Activated CD4-positive, alpha-beta memory T cell treated with anti-CD3 and anti-CD28 coated beads, Interleukin-2, amount 10 ng/mL, durations not matched to agents 7 days and 5 days (primary cell): ENCODE measurements at regions of chr18 and their contacts with region 1.

Region 1: DNA sequence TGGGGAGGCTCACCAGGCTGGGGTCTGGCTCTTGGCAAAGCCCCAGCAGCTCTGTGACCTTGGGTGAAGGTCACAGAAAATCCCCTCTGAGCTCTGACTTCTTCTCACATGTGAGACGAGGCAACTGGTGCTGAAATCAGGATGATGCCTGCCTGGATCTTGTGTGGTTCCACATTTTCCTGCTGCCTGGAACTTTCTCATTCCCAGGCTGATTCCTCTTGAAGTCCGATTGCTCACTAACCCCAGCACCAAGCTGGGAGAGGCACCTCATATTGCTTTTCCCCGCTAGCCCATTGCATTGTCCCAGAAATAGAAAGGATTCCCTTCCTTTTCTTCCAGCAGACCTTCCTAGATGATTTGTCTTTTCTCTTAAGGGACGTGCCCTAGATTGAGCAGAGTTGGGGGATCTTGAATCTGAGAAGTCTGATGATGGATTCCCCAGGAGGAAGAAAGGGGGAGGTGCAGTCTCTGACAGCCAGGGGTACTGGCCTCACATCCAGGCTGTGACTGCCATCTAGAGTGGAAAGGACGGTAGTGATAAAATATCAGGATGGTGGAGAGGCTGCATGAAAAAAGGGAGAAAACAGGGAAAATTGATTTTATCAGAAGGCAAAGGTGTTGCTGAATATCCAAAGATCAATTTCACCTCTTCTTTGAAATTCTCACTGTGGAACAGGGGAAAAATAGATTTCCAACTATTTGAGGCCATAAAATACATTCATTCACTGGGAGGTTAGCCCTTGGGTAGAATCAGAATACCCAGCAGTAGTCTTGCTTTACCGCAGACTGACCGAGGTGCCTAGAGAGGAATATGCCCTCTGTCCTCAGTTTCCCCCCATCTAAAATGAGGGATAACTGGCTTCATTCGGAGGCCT is 96.3 kb downstream of the FAM210A start:
- DNase-seq: peak; percentile 55
- H3K4me3 Mint-ChIP-seq: no peak overlapping the region
- H3K27ac Mint-ChIP-seq: no peak overlapping the region
- H3K4me1 Mint-ChIP-seq: peaks cover 9% of the 10 kb centered on the region
- H3K27me3 Mint-ChIP-seq: no peaks in the 10 kb centered on the region

Region 2: DNA sequence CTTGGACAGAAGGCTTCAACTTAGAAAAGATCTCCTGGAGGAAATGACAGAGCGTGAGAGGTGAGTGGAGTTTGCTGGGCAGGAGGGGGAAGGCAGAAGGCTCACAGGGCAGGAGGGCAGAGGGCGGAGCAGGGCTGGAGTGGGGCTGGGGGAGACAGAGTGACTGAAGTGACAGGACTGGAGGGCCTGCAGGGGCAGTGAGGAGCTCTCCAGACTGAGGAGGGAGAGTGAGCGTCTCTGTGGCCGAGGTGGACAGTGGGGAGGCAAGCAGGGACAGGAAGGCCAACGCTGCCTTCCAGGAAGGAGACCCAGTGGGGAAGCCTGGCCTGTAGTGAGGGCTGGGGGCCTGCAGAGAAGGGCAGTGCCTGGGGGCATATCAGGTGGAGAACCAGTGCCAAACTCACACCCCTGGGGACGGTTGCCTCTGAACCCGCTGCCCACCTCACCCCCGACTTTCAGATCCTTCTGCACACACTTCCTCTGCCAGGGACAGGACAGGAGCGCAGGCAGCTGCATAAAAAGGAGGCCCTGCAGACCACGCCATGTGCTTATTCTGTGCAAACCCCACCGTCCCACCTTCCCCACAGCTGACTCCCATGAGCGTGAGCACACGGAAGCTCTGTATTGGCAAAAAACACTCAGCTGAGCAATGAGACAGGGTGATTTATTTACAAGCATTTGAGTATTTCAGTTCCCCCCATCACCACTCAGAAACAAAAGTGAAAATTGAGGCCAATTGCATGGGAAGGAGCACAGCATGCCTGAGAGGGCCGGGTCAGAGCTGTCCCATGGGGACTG is 148.1 kb before region 1 on chr18:
- CTCF ChIA-PET with region 1: no interaction called
- POLR2A ChIA-PET with region 1: no interaction called
- DNase-seq: no peak
- H3K4me3 Mint-ChIP-seq: no peak overlapping the region
- H3K27ac Mint-ChIP-seq: no peak overlapping the region
- H3K4me1 Mint-ChIP-seq: peaks cover 3% of the 10 kb centered on the region
- H3K27me3 Mint-ChIP-seq: no peaks in the 10 kb centered on the region

Region 3: DNA sequence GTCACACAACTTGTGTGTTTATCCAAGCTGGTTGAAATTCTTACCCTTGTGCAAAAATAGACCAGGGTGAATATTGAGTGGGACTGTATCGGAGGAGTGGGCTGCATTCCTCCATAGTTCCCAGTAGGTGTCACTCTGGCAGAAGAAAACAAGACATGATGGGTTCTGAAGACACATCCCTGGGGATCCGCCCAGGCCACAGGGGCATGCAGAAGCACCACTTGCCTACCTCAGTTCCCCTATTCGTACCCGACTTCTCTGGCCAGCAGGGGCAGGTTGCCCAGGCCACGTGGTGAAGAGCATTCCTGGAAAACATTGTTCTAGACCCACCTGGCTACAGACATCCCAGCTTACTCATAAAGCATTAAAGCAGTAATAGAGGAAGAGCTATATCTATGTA is 72.0 kb before region 1 on chr18:
- CTCF ChIA-PET with region 1: interaction called, 49 read pairs
- POLR2A ChIA-PET with region 1: no interaction called
- DNase-seq: peak; percentile 33
- H3K4me3 Mint-ChIP-seq: no peak overlapping the region
- H3K27ac Mint-ChIP-seq: no peak overlapping the region
- H3K4me1 Mint-ChIP-seq: peaks cover 22% of the 10 kb centered on the region
- H3K27me3 Mint-ChIP-seq: no peaks in the 10 kb centered on the region

Region 4: DNA sequence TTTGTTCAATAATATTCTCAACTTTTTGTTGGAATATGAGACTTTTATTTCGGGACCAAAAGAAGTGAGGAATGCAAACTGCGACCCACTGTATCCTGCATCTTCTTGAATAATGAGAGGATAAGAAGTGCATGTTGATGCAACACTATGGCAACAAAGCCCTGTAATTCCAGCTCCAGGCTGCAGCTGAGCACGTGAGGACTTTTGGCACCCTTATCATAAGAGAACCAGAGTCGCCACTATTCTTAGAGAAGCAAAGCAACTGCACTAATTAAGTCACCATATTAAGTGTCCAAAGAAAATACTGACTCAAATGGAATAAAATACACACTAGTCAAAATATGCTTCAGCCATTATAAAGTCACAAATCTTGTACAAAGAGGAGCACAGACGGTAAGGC is 30.4 kb after region 1 on chr18:
- CTCF ChIA-PET with region 1: no interaction called
- POLR2A ChIA-PET with region 1: no interaction called
- DNase-seq: no peak
- H3K4me3 Mint-ChIP-seq: no peak overlapping the region
- H3K27ac Mint-ChIP-seq: no peak overlapping the region
- H3K4me1 Mint-ChIP-seq: no peaks in the 10 kb centered on the region
- H3K27me3 Mint-ChIP-seq: no peaks in the 10 kb centered on the region

Region 5: GRCh38 chr18:13868501-13869271 is 238.6 kb after region 1 on chr18:
- CTCF ChIA-PET with region 1: no interaction called
- POLR2A ChIA-PET with region 1: no interaction called
- DNase-seq: no peak
- H3K4me3 Mint-ChIP-seq: no peak overlapping the region
- H3K27ac Mint-ChIP-seq: no peak overlapping the region
- H3K4me1 Mint-ChIP-seq: no peaks in the 10 kb centered on the region
- H3K27me3 Mint-ChIP-seq: peaks cover 45% of the 10 kb centered on the region

Region 6: DNA sequence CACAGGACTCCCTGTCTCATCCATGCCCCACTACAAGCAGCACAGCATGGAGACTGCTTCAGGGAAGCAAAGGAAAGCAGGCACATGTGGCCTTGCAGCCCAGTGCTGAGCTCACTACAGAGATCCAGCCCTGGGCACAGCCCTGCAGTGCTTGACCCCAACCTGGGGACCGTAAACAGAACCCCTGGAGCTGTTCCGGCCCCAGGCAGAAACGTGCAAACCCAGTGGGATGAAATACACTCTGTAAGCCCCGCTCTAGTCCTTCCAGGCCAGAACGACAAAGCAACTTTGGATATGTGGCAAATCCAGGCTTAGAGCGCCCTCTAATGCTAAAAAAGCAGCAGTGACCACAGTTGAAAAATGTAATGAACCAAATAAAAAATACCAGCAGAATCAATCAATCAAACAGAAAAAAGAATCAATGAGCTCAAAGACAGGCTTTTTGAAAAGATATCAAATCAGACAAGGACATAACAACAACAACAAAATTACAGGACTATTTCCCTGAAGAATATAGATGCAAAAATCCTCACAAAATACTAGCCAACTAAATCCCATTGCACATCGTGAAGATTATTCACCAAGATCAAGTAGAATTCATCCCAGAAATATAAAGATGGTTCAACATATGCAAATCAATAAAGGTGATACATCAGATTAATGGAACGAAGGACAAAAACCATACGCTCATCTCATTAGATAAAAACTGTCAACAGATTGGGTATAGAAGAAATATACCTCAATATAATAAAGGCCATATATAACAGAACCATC is 456.6 kb after region 1 on chr18:
- CTCF ChIA-PET with region 1: no interaction called
- POLR2A ChIA-PET with region 1: no interaction called
- DNase-seq: no peak
- H3K4me3 Mint-ChIP-seq: no peak overlapping the region
- H3K27ac Mint-ChIP-seq: no peak overlapping the region
- H3K4me1 Mint-ChIP-seq: no peaks in the 10 kb centered on the region
- H3K27me3 Mint-ChIP-seq: no peaks in the 10 kb centered on the region